Motor neuron (in vitro differentiated cells): ENCODE measurements at regions of chr22 and their contacts with region 1.

Region 1: GRCh38 chr22:38051900-38052862 is 5.0 kb upstream of the PICK1 start:
- ATAC-seq: peak; percentile 58 to 78 (median 62)
- H3K4me3 ChIP-seq: no peak overlapping the region
- H3K27ac ChIP-seq: no peak overlapping the region
- H3K4me1 ChIP-seq: peaks cover 3 to 6% of the 10 kb centered on the region in 2 donors

Region 2: GRCh38 chr22:38305471-38306448 is 253.6 kb after region 1 on chr22:
- in situ Hi-C with region 1: no loop called
- ATAC-seq: peak in 7 of 8 experiments; percentile 9 to 61 (median 50)
- H3K4me3 ChIP-seq: no peak overlapping the region
- H3K27ac ChIP-seq: no peak overlapping the region
- H3K4me1 ChIP-seq: peaks cover 0 to 8% of the 10 kb centered on the region in 2 donors

Region 3: DNA sequence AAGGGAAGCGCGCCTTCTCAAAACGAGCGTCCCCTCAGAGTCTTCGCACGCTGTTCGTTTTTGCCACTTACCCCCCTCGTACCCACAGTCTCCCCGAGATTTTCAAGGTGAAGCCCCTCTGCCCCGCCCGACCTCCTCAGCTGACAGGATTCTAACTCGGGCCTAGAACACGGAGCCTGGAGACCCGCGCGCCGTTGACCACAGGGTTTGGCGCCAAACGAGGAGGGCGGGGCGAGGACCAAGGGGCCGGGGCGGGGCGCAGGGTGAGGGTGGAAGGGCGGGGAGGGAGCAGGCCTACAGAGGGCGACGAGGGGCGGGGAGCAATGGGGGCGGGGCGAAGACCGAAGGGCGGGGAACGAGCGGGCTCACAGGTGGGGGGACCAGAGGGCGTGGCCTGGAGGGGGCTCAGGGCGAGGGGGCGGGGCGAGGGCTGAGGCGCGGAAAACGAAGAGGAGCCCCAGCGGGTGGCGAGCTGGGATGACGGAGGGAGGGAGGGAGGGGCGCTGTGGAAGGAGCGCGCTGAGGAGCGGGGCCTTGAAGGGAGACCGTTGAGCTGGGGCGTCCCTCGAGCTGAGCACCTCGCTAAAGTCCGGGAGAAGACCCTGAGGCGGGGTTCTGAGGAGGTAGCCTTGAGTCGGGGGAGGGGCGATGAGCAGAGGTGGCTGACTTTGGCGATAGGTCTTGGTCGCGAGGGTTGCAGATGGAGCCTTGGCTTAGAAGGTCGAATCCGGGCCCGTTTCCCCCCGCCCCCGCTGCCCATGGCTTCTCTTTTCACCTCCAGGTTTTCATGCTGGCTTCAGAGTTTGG is 518.0 kb after region 1 on chr22 and contains the start of gene DMC1:
- in situ Hi-C with region 1: loop called in 5 of 9 experiments (anchors 25 kb)
- ATAC-seq: peak; percentile 77 to 89 (median 83)
- H3K4me3 ChIP-seq: peak within 1 kb of the TSS; percentile 50 to 65 (median 53)
- H3K27ac ChIP-seq: no peak within 1 kb of the TSS
- H3K4me1 ChIP-seq: peaks cover 8 to 11% of the 10 kb centered on the region in 2 donors
- total RNA-seq, gene DMC1: 0.15 to 7.4 (median 0.67) TPM

Region 4: GRCh38 chr22:38578505-38578904 is 526.3 kb after region 1 on chr22:
- in situ Hi-C with region 1: loop called in 5 of 9 experiments (anchors 25 kb)
- ATAC-seq: no peak
- H3K4me3 ChIP-seq: no peak overlapping the region
- H3K27ac ChIP-seq: no peak overlapping the region
- H3K4me1 ChIP-seq: no peaks in the 10 kb centered on the region